B cell (primary cell): ENCODE measurements at regions of chr12 and their contacts with region 1.

Region 1: DNA sequence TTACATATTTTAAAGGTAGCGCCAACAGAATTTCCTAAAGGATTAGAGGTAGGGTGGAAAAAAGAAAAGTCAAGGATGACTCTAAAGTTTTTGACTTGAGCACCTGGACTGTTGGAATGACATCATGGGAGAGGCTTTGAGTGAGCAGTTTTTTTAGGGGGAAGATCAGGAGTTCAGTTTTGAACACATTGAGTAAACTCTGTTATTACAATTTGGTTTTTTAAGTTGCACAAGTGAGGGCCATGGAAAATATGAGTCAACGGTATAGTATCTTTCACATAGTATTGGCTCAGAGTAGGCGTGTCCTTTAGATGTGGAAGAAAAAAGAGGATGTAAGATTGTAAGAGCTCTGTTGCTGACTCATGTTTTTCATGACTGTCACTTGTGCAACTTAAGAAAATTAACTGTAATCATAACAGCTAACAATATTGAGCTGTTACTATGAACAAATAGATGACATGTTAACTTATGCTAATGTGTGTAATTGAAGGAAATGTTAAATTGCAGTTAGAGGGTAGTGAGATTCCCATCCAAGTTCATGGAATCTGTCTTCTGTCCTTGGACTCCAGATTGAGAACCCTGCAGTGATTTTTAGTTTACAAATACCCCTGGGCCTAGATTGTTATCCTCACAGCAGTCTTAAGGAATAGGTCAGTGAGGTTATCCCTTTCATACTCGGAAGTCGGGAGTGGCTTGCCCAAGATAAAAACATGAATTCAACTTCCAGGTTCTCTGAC is 48.1 kb upstream of the ATP2B1 start:
- DNase-seq: peak; percentile 69
- ATAC-seq: peak; percentile 78
- H3K4me3 ChIP-seq: no peak overlapping the region
- H3K4me3 Mint-ChIP-seq: peak overlapping the region; percentile 33
- H3K27ac ChIP-seq: peak overlapping the region; percentile 14 to 67
- H3K27ac Mint-ChIP-seq: peak overlapping the region; percentile 92
- H3K4me1 ChIP-seq: peaks cover 44 to 47% of the 10 kb centered on the region in 2 donors
- H3K4me1 Mint-ChIP-seq: peaks cover 55% of the 10 kb centered on the region
- H3K27me3 ChIP-seq: no peaks in the 10 kb centered on the region
- H3K27me3 Mint-ChIP-seq: no peaks in the 10 kb centered on the region
- CTCF ChIP-seq: no peak

Region 2: DNA sequence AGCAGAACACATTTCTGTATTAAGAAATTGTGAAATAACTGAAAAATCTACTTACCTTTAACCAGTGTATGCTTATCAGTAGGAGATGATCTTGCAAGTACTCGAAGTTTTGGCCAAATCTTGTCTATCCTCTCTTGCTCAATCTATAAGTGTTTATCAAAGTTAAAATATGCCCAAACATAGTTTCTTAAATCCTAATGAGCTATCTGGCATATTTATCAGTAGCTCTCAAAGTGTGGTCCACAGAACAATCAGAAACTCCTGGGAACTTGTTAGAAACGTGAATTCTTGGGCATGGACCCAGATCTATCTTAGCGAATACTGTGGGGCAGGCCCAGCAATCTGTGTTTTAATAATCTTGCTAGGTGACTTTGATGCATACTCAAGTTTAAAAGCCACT is 146.4 kb before region 1 on chr12:
- CTCF ChIA-PET with region 1: no interaction called
- POLR2A ChIA-PET with region 1: no interaction called
- intact Hi-C with region 1: no loop called
- DNase-seq: no peak
- ATAC-seq: no peak
- H3K4me3 ChIP-seq: no peak overlapping the region
- H3K4me3 Mint-ChIP-seq: no peak overlapping the region
- H3K27ac ChIP-seq: peak overlapping the region in 1 of 2 donors; percentile 29
- H3K27ac Mint-ChIP-seq: peak overlapping the region; percentile 27
- H3K4me1 ChIP-seq: no peaks in the 10 kb centered on the region
- H3K4me1 Mint-ChIP-seq: peaks cover 3% of the 10 kb centered on the region
- H3K27me3 ChIP-seq: no peaks in the 10 kb centered on the region
- H3K27me3 Mint-ChIP-seq: no peaks in the 10 kb centered on the region
- CTCF ChIP-seq: no peak

Region 3: GRCh38 chr12:89661706-89662330 is 94.9 kb before region 1 on chr12:
- CTCF ChIA-PET with region 1: no interaction called
- POLR2A ChIA-PET with region 1: no interaction called
- intact Hi-C with region 1: no loop called
- DNase-seq: no peak
- ATAC-seq: no peak
- H3K4me3 ChIP-seq: no peak overlapping the region
- H3K4me3 Mint-ChIP-seq: peak overlapping the region; percentile 9
- H3K27ac ChIP-seq: peak overlapping the region in 1 of 2 donors; percentile 61
- H3K27ac Mint-ChIP-seq: peak overlapping the region; percentile 0
- H3K4me1 ChIP-seq: peaks cover 48 to 75% of the 10 kb centered on the region in 2 donors
- H3K4me1 Mint-ChIP-seq: peaks cover 79% of the 10 kb centered on the region
- H3K27me3 ChIP-seq: no peaks in the 10 kb centered on the region
- H3K27me3 Mint-ChIP-seq: no peaks in the 10 kb centered on the region
- CTCF ChIP-seq: no peak

Region 4: GRCh38 chr12:89742337-89743022 is 14.3 kb before region 1 on chr12:
- CTCF ChIA-PET with region 1: interaction called, 4 read pairs
- POLR2A ChIA-PET with region 1: no interaction called
- intact Hi-C with region 1: loop called (anchors 1 kb)
- DNase-seq: peak; percentile 65
- ATAC-seq: peak; percentile 92
- H3K4me3 ChIP-seq: peak overlapping the region in 2 of 5 experiments; percentile 21 to 48
- H3K4me3 Mint-ChIP-seq: peak overlapping the region; percentile 70
- H3K27ac ChIP-seq: peak overlapping the region; percentile 18 to 72
- H3K27ac Mint-ChIP-seq: peak overlapping the region; percentile 91
- H3K4me1 ChIP-seq: peaks cover 12 to 14% of the 10 kb centered on the region in 2 donors
- H3K4me1 Mint-ChIP-seq: peaks cover 20% of the 10 kb centered on the region
- H3K27me3 ChIP-seq: no peaks in the 10 kb centered on the region
- H3K27me3 Mint-ChIP-seq: no peaks in the 10 kb centered on the region
- CTCF ChIP-seq: no peak

Region 5: GRCh38 chr12:89856431-89856830 is 99.7 kb after region 1 on chr12:
- CTCF ChIA-PET with region 1: no interaction called
- POLR2A ChIA-PET with region 1: no interaction called
- intact Hi-C with region 1: loop called (anchors 2 kb)
- DNase-seq: peak; percentile 71
- ATAC-seq: peak; percentile 88
- H3K4me3 ChIP-seq: peak overlapping the region in 1 of 5 experiments; percentile 21
- H3K4me3 Mint-ChIP-seq: peak overlapping the region; percentile 64
- H3K27ac ChIP-seq: no peak overlapping the region
- H3K27ac Mint-ChIP-seq: peak overlapping the region; percentile 76
- H3K4me1 ChIP-seq: peaks cover 45 to 46% of the 10 kb centered on the region in 2 donors
- H3K4me1 Mint-ChIP-seq: peaks cover 50% of the 10 kb centered on the region
- H3K27me3 ChIP-seq: no peaks in the 10 kb centered on the region
- H3K27me3 Mint-ChIP-seq: no peaks in the 10 kb centered on the region
- CTCF ChIP-seq: no peak

Region 6: DNA sequence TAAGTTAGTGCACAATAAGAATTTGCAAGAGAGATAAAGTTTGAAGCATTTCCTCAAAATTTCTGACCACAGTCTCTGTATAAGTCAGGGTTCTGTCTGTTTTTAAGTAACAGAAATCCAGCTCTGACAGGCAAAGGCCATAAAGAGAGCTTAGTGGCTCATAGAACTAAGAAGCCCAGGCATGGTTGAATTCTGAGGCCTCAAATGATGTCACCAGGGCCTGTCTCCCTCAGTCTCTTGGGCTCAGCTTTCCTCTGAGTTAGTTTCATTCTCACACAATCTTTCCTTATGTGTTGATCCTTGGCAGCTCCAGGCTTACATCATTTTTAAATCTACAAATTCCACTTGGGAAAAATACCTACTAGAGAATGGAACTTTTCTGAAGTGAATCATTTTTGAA is 125.3 kb after region 1 on chr12:
- CTCF ChIA-PET with region 1: interaction called, 4 read pairs
- POLR2A ChIA-PET with region 1: interaction called, 3 read pairs
- intact Hi-C with region 1: loop called (anchors 2 kb)
- DNase-seq: peak; percentile 58
- ATAC-seq: peak; percentile 22
- H3K4me3 ChIP-seq: peak overlapping the region in 1 of 5 experiments; percentile 3
- H3K4me3 Mint-ChIP-seq: peak overlapping the region; percentile 89
- H3K27ac ChIP-seq: peak overlapping the region; percentile 94 to 95
- H3K27ac Mint-ChIP-seq: peak overlapping the region; percentile 99
- H3K4me1 ChIP-seq: peaks cover 45 to 52% of the 10 kb centered on the region in 2 donors
- H3K4me1 Mint-ChIP-seq: peaks cover 52% of the 10 kb centered on the region
- H3K27me3 ChIP-seq: no peaks in the 10 kb centered on the region
- H3K27me3 Mint-ChIP-seq: no peaks in the 10 kb centered on the region
- CTCF ChIP-seq: no peak

Region 7: DNA sequence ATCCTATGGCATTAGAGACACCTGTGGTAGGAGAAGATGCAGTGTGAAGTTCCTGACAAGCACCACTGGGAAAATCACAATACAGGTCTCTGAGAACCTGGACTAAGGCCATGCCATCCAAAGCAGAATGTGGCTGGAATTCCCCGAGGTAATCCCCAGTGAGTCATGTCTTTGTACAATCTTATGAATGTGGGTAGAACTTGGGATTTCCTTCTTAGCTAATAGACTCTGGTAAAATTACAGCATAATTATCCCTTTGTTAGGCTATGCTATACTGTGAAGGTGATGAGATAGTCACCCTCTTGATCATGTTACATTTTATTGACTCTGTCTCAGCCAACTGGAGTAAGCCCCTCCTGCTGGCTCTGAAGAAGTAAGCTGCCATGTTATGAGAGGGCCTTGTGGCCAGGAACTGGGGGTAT is 1650.2 kb after region 1 on chr12:
- CTCF ChIA-PET with region 1: no interaction called
- POLR2A ChIA-PET with region 1: no interaction called
- intact Hi-C with region 1: no loop called
- DNase-seq: no peak
- ATAC-seq: no peak
- H3K4me3 ChIP-seq: no peak overlapping the region
- H3K4me3 Mint-ChIP-seq: no peak overlapping the region
- H3K27ac ChIP-seq: no peak overlapping the region
- H3K27ac Mint-ChIP-seq: no peak overlapping the region
- H3K4me1 ChIP-seq: no peaks in the 10 kb centered on the region
- H3K4me1 Mint-ChIP-seq: no peaks in the 10 kb centered on the region
- H3K27me3 ChIP-seq: no peaks in the 10 kb centered on the region
- H3K27me3 Mint-ChIP-seq: peaks cover 11% of the 10 kb centered on the region
- CTCF ChIP-seq: no peak